Caco-2 (cell line): ENCODE measurements at regions of chr1 and their contacts with region 1.

Region 1: DNA sequence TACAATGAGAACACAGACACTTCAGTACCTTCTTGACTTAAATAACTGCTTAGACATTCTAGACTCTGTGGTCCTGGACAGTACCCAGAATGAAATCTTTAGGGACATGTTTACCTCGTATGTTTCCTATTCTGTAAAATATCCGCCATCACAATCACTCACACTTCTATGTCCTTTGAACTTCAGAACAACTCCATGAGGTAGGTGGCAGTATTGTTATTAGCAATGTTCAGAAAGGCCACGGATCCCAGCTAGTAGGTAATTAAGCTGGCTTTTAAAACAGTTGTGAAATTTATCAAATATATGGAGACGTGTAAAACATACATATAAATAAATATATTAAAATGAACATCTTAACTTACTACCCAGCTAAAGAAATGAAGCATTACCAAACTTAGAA is 83.4 kb downstream of the CACHD1 start:
- DNase-seq: peak in 1 of 2 experiments; percentile 11
- H3K4me3 ChIP-seq: no peak overlapping the region
- H3K4me3 Mint-ChIP-seq: no peak overlapping the region
- H3K27ac Mint-ChIP-seq: no peak overlapping the region
- H3K4me1 ChIP-seq: no peaks in the 10 kb centered on the region
- H3K4me1 Mint-ChIP-seq: no peaks in the 10 kb centered on the region
- H3K27me3 ChIP-seq: no peaks in the 10 kb centered on the region
- H3K27me3 Mint-ChIP-seq: no peaks in the 10 kb centered on the region
- CTCF ChIP-seq: peak in 1 of 2 experiments; percentile 13

Region 2: DNA sequence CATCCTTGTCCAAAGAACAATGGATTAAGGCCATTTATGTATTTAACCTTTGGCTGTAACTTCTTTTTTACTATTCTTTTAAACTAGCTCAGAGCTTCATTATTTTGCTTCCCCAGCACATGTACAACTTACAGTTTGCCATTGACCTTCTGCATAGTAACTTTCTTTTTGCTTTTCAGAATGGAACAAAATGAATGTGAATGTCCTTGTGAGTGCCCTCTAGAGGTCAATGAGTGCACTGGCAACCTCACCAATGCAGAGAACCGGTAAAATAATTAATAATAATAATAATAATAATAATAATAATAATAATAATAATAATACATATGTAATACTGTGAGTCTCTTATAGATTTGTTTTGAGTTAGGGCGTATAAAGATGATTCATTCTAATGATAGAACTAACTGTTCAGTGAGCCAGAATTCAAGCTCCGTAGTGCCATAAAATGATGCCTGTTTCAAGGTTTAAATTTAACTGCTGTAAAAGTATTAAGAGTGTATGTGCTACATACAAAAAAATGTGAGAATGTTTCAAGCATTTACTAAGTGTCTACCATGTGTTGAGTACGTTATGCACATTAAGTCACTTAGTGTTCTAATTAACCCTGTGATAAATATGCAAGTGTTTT is 122.6 kb after region 1 on chr1:
- CTCF ChIA-PET with region 1: no interaction called
- POLR2A ChIA-PET with region 1: no interaction called
- intact Hi-C with region 1: loop called (anchors 1 kb)
- DNase-seq: peak in 1 of 2 experiments; percentile 3
- H3K4me3 ChIP-seq: no peak overlapping the region
- H3K4me3 Mint-ChIP-seq: no peak overlapping the region
- H3K27ac Mint-ChIP-seq: no peak overlapping the region
- H3K4me1 ChIP-seq: no peaks in the 10 kb centered on the region
- H3K4me1 Mint-ChIP-seq: no peaks in the 10 kb centered on the region
- H3K27me3 ChIP-seq: no peaks in the 10 kb centered on the region
- H3K27me3 Mint-ChIP-seq: no peaks in the 10 kb centered on the region
- CTCF ChIP-seq: peak; percentile 29 to 52